Panc1 (cell line): ENCODE measurements at regions of chr5 and their contacts with region 1.

Region 1: GRCh38 chr5:73826301-73827105 is 200.5 kb downstream of the ARHGEF28 start:
- DNase-seq: no peak
- ATAC-seq: peak; percentile 41
- H3K4me3 ChIP-seq: no peak overlapping the region
- H3K27ac ChIP-seq: no peak overlapping the region
- H3K4me1 ChIP-seq: peaks cover 17% of the 10 kb centered on the region
- H3K27me3 ChIP-seq: no peaks in the 10 kb centered on the region
- CTCF ChIP-seq: no peak

Region 2: DNA sequence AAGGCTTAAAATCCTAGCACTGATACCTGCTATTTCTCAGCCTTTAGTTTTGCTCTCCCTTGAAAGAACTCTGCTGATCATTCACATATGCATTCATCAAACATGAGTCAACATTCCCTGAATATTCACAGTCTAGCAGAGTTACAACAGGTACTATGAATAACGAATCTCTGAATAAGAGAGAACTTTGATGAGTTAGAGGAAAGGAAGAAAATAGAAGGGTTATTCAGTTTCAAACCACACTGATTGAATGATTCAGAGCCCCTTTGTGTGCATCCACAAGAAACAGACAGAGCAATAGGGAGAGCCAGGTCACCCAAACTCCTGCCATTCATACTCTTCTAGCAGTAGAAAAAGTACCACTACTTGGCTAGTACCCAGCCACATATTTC is 413.9 kb before region 1 on chr5:
- CTCF ChIA-PET with region 1: no interaction called
- POLR2A ChIA-PET with region 1: no interaction called
- in situ Hi-C with region 1: no loop called
- intact Hi-C with region 1: no loop called
- DNase-seq: no peak
- ATAC-seq: peak; percentile 49; the same call in 1 of the 2 replicates
- H3K4me3 ChIP-seq: no peak overlapping the region
- H3K27ac ChIP-seq: peak overlapping the region; percentile 3; the same call in 1 of the 2 replicates
- H3K4me1 ChIP-seq: peaks cover 16% of the 10 kb centered on the region
- H3K27me3 ChIP-seq: no peaks in the 10 kb centered on the region
- CTCF ChIP-seq: no peak

Region 3: GRCh38 chr5:73945498-73945897 is 119.0 kb after region 1 on chr5:
- CTCF ChIA-PET with region 1: interaction called, 10 read pairs
- POLR2A ChIA-PET with region 1: no interaction called
- in situ Hi-C with region 1: no loop called
- intact Hi-C with region 1: no loop called
- DNase-seq: peak; percentile 10
- ATAC-seq: no peak
- H3K4me3 ChIP-seq: no peak overlapping the region
- H3K27ac ChIP-seq: no peak overlapping the region
- H3K4me1 ChIP-seq: no peaks in the 10 kb centered on the region
- H3K27me3 ChIP-seq: no peaks in the 10 kb centered on the region; the same call in 1 of the 2 replicates
- CTCF ChIP-seq: peak; percentile 69

Region 4: GRCh38 chr5:74684900-74685851 is 858.7 kb after region 1 on chr5 and contains the start of gene HEXB:
- CTCF ChIA-PET with region 1: no interaction called
- POLR2A ChIA-PET with region 1: no interaction called
- in situ Hi-C with region 1: no loop called
- intact Hi-C with region 1: no loop called
- DNase-seq: no peak
- ATAC-seq: peak; percentile 99
- H3K4me3 ChIP-seq: peak within 1 kb of the TSS; percentile 88 to 96
- H3K27ac ChIP-seq: peak within 1 kb of the TSS; percentile 92
- H3K4me1 ChIP-seq: peaks cover 12% of the 10 kb centered on the region
- H3K27me3 ChIP-seq: no peaks in the 10 kb centered on the region
- CTCF ChIP-seq: no peak; the same call in 1 of the 2 replicates
- total RNA-seq, gene HEXB: 248 TPM